Endothelial cell of umbilical vein (primary cell): ENCODE measurements at regions of chr17 and their contacts with region 1.

Region 1: DNA sequence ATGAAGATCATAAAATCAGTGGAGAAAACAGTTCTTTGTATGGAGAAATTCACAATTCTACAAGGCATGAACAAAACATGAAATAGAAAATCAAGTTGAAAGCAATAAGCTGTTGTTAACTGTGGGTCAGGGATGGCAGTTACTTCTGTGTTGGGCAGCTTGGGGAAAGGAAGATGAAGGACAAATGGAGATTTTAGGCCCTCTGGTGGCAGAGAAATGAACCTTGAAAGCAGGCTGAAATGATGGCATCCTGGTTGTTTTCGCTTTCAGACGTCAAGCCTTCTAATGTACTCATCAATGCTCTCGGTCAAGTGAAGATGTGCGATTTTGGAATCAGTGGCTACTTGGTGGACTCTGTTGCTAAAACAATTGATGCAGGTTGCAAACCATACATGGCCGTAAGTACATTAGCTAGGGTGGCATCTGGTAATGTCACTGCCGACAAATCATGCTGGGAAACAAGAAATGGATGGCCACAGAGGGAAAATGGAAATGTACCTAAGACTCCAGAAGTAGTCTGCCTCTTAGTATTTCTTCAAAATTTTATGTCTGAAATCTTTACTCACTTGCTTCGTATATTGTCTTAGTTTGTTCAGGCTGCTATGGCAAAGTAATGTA is 108.9 kb downstream of the MAP2K6 start:
- DNase-seq: peak; percentile 76
- H3K4me3 ChIP-seq: no peak overlapping the region
- H3K27ac ChIP-seq: no peak overlapping the region
- H3K4me1 ChIP-seq: peaks cover 14% of the 10 kb centered on the region
- H3K27me3 ChIP-seq: no peaks in the 10 kb centered on the region
- CTCF ChIP-seq: peak; percentile 68 to 74
- POLR2A ChIP-seq: no peak

Region 2: GRCh38 chr17:68771867-68772515 is 751.4 kb before region 1 on chr17:
- CTCF ChIA-PET with region 1: interaction called, 34 read pairs
- POLR2A ChIA-PET with region 1: no interaction called
- dilution Hi-C with region 1: no loop called
- intact Hi-C with region 1: loop called (anchors 1 kb)
- DNase-seq: peak; percentile 82
- H3K4me3 ChIP-seq: no peak overlapping the region
- H3K27ac ChIP-seq: no peak overlapping the region
- H3K4me1 ChIP-seq: peaks cover 23% of the 10 kb centered on the region
- H3K27me3 ChIP-seq: no peaks in the 10 kb centered on the region
- CTCF ChIP-seq: peak; percentile 51 to 59
- POLR2A ChIP-seq: no peak

Region 3: DNA sequence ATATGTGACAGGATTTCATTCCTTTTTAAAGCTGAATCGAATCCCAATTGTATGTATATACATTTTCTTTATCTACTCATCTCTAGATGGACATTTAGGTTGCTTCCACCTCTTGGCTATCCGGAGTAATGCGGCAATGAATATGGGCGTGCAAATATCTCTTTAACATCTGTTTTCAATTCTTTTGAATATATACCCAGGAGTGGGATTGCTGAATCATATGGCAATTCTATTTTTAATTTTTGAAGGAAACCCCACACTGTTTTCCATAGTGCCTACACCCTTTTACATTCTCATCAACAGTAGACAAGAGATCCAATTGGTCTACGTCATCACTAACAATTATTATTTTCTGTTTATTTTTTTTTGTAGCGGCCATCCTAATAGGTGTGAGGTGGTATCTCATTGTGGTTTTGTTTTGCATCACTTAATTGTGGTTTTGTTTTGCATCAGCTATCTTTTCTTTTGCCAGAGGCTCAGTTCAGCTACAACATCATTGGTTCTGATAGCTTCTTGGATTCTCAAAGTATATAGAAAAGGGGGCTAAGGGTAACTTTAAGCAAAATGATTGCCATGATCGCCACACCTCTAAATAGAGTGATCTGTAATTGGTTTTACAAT is 134.4 kb before region 1 on chr17:
- CTCF ChIA-PET with region 1: interaction called, 66 read pairs
- POLR2A ChIA-PET with region 1: no interaction called
- dilution Hi-C with region 1: no loop called
- intact Hi-C with region 1: loop called (anchors 1 kb)
- DNase-seq: no peak
- H3K4me3 ChIP-seq: no peak overlapping the region
- H3K27ac ChIP-seq: no peak overlapping the region
- H3K4me1 ChIP-seq: no peaks in the 10 kb centered on the region
- H3K27me3 ChIP-seq: no peaks in the 10 kb centered on the region
- CTCF ChIP-seq: no peak
- POLR2A ChIP-seq: no peak

Region 4: GRCh38 chr17:69511250-69511649 is 12.1 kb before region 1 on chr17:
- CTCF ChIA-PET with region 1: interaction called, 12 read pairs
- POLR2A ChIA-PET with region 1: no interaction called
- dilution Hi-C with region 1: no loop called
- intact Hi-C with region 1: no loop called
- DNase-seq: no peak
- H3K4me3 ChIP-seq: no peak overlapping the region
- H3K27ac ChIP-seq: no peak overlapping the region
- H3K4me1 ChIP-seq: no peaks in the 10 kb centered on the region
- H3K27me3 ChIP-seq: no peaks in the 10 kb centered on the region
- CTCF ChIP-seq: no peak
- POLR2A ChIP-seq: no peak

Region 5: DNA sequence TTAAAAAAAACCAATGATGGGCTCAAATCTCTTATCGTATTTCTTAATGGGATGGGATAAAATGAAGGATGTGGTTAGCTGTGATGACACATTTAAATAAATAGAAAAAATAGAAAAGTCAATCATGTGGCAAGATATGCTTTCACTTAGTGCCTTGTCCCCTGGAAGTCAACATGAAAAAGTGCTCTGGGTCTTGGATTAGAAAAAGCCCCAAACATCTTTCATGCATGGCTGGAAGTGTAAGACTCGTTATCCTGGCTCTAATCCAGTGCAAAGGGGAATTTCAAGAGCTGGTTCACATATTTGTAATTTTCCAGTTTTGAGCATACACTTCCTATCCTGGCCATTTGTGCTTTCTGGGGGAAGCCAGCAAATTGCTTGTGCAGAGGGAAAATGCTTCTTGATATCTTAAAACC is 52.0 kb after region 1 on chr17:
- CTCF ChIA-PET with region 1: interaction called, 30 read pairs
- POLR2A ChIA-PET with region 1: no interaction called
- dilution Hi-C with region 1: no loop called
- intact Hi-C with region 1: no loop called
- DNase-seq: peak; percentile 82
- H3K4me3 ChIP-seq: no peak overlapping the region
- H3K27ac ChIP-seq: no peak overlapping the region
- H3K4me1 ChIP-seq: peaks cover 18% of the 10 kb centered on the region
- H3K27me3 ChIP-seq: peaks cover 5 to 12% of the 10 kb centered on the region in 2 experiments
- CTCF ChIP-seq: no peak
- POLR2A ChIP-seq: no peak

Region 6: GRCh38 chr17:69711541-69711940 is 188.2 kb after region 1 on chr17:
- CTCF ChIA-PET with region 1: no interaction called
- POLR2A ChIA-PET with region 1: no interaction called
- dilution Hi-C with region 1: no loop called
- intact Hi-C with region 1: no loop called
- DNase-seq: no peak
- H3K4me3 ChIP-seq: no peak overlapping the region
- H3K27ac ChIP-seq: no peak overlapping the region
- H3K4me1 ChIP-seq: no peaks in the 10 kb centered on the region
- H3K27me3 ChIP-seq: no peaks in the 10 kb centered on the region
- CTCF ChIP-seq: no peak
- POLR2A ChIP-seq: no peak

Region 7: DNA sequence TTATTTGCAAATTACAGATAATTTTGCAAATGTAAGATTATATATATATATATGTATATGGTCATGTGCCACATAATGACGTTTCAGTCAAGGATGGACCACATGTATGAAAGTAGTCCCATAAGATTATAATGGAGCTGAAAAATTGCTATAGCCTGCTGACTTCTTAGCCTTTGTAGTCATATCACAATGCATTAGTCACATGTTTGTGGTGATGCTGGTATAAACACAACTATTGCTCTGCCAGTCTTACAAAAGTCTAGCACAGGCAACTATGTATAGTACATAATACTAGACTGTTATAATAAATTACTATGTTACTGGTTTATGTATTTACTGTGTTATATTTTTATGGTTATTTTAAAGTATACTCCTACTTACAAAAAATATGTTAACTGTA is 1090.3 kb after region 1 on chr17:
- CTCF ChIA-PET with region 1: interaction called, 11 read pairs
- POLR2A ChIA-PET with region 1: no interaction called
- dilution Hi-C with region 1: no loop called
- intact Hi-C with region 1: no loop called
- DNase-seq: no peak
- H3K4me3 ChIP-seq: no peak overlapping the region
- H3K27ac ChIP-seq: no peak overlapping the region
- H3K4me1 ChIP-seq: no peaks in the 10 kb centered on the region
- H3K27me3 ChIP-seq: no peaks in the 10 kb centered on the region
- CTCF ChIP-seq: no peak
- POLR2A ChIP-seq: no peak